ENCODE measurements at regions of chr2 and their contacts with region 1.

Region 1: GRCh38 chr2:182642328-182642727 is 73.7 kb upstream of the DNAJC10 start:
- DNase-seq: peak; percentile 36 to 50
- ATAC-seq: peak in 6 of 8 donors; percentile 51 to 85 (median 62)
- H3K4me3 ChIP-seq: no peak overlapping the region
- H3K27ac ChIP-seq: no peak overlapping the region
- H3K4me1 ChIP-seq: no peaks in the 10 kb centered on the region
- H3K27me3 ChIP-seq: no peaks in the 10 kb centered on the region
- CTCF ChIP-seq: no peak

Region 2: DNA sequence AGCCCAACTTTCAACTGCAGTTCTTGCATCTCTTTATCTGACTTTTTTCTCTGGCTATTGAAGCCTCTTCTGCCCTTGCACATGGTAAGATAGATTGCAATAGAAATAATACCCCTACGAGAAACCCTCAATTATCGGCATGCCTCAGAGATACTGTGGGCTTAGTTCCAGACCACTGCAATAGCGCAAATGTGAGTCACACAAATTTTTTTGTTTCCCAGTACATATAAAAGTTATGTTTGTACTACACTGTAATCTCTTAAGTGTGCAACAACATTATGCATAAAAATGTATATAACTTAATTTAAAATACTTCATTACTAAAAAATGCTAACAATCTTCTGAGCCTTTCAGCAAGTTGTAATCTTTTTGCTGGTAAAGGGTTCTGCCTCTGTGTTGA is 340.2 kb before region 1 on chr2:
- intact Hi-C with region 1: loop called in 1 of 10 experiments (anchors 10 kb)
- DNase-seq: no peak
- ATAC-seq: no peak
- H3K4me3 ChIP-seq: no peak overlapping the region
- H3K27ac ChIP-seq: no peak overlapping the region
- H3K4me1 ChIP-seq: peaks cover 0 to 33% (median 4%) of the 10 kb centered on the region in 9 donors
- H3K27me3 ChIP-seq: no peaks in the 10 kb centered on the region
- CTCF ChIP-seq: no peak

Region 3: DNA sequence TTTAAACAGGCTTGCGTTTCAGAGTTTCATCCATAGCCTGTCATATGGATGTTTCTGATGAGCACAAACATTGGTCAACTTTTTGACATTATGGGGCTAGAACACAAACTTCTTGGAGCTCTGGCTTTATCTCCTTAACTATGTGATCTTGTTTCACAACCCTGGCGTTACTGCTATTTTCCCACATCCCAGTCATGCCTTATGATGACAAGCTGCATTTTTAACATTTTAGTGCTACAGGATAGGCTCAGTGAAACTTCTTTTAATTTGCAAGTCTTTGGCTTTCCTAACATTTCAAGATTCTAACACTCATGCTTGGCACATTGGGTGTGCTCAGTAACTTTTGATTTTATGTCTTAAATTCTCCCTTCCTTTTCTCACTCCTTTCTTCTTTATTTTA is 194.5 kb before region 1 on chr2:
- intact Hi-C with region 1: loop called in 1 of 10 experiments (anchors 10 kb)
- DNase-seq: no peak
- ATAC-seq: peak in 2 of 8 donors; percentile 38 to 70
- H3K4me3 ChIP-seq: no peak overlapping the region
- H3K27ac ChIP-seq: no peak overlapping the region
- H3K4me1 ChIP-seq: peaks cover 0 to 27% (median 9%) of the 10 kb centered on the region in 9 donors
- H3K27me3 ChIP-seq: no peaks in the 10 kb centered on the region
- CTCF ChIP-seq: no peak

Region 4: DNA sequence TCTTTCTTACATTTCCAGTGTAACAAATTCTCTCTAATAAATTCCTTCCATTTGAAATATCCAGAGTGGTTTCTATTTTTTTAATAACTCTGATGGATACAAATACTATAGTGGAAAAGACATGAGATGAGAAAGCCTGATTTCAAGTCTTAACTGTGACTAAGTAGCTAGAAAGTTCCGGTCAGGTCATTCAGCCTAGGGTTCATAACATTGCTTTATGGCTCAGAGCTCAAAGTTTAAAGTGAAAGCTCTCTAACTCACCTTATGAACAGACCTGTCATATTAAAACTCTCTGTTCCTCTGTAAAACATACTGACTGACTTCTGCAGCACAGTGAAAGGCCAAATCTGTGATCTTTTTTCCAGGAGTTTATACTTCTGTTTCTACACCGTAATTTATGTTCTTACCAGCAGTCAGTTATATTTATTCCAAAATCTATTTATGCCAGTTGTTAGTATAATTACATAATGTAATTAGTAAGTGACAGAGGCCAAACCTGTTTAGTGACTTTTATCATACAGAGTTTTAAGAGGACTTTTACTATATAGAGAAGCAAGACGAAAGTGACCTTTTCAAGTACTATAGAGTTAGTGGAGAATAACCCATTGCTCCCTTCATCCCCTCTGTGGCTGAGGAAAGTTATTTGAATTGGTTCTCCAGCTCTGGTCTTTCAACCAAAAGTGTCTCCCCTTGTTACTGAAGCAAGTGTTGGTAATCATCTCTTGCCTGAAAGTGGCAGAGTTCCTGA is 96.7 kb before region 1 on chr2:
- intact Hi-C with region 1: loop called in 1 of 10 experiments (anchors 10 kb)
- DNase-seq: no peak
- ATAC-seq: no peak
- H3K4me3 ChIP-seq: no peak overlapping the region
- H3K27ac ChIP-seq: peak overlapping the region in 2 of 10 donors; percentile 4 to 51
- H3K4me1 ChIP-seq: peaks cover 0 to 32% (median 22%) of the 10 kb centered on the region in 9 donors
- H3K27me3 ChIP-seq: no peaks in the 10 kb centered on the region
- CTCF ChIP-seq: no peak